ENCODE measurements at regions of chr6 and their contacts with region 1.

Region 1: DNA sequence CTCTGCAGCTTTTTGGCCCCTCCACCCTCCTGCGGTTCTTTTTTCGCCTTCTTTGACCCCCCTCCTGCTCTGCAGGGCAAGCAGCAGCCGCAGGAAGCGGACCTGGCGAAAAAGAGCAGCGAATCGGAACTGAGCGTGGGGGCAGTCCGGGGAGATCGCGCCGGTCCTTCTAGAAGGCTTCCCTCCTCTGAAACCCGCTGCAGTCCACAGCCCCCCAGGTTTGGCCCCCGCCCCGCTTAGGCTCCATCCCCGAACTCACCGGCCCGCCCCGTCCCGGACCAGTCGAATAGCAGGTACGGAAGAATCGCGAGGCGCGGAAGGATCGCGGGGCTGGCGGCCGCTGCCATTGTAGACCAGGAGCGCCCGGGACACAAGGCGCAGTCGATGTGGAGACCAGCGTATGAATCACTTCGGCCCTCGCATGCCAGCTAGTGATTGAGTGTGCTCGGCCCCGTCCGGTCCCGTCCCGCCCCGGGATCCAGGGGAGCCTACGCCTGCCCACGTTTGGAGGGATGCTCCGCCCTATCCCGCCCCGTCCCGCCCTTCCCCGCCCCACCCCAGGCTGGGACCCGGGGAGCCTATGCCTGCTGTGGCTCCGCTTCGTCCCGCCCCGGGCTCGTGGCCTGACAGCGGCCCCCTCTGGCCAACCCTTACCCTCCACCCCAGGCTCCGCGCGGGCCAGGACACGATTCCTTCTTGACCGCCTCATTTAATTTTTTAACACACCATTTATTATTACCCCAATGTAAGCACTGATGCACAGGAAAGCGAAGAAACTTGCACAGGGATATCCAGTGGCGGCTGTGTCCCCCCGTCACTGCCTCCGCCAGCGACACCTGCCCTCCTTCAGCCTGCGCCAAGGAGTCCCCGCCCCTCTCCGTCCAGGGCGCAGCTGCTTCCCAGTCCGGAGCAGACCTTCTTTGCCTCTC is at the start of gene ULBP3:
- DNase-seq: peak; percentile 64
- ATAC-seq: peak; percentile 92
- H3K4me3 Mint-ChIP-seq: peak within 1 kb of the TSS; percentile 84
- H3K27ac Mint-ChIP-seq: peak within 1 kb of the TSS; percentile 7
- H3K4me1 Mint-ChIP-seq: peaks cover 22% of the 10 kb centered on the region
- H3K27me3 Mint-ChIP-seq: peaks cover 18% of the 10 kb centered on the region
- CTCF ChIP-seq: no peak
- total RNA-seq, gene ULBP3: 0.46 and 0.80 TPM in 2 replicates

Region 2: DNA sequence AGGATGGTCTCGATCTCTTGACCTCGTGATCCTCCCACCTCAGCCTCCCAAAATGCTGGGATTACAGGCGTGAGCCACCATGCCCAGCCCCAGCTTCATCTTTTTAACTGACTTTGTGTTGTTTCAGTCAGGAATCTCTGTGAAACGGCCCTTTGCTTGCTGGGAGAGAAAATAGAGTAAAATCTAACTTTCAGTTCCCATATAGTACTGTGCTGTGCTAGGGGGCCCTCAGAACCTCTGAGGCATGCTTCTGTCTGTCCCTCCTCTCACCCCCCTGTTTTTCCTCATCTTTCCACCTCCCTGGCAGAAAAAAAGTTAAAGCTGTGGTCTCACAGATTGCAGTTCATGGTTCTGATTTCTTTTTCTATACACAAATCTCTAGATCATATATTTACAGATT is 253.2 kb before region 1 on chr6:
- CTCF ChIA-PET with region 1: no interaction called
- POLR2A ChIA-PET with region 1: no interaction called
- intact Hi-C with region 1: no loop called
- DNase-seq: no peak
- ATAC-seq: no peak
- H3K4me3 Mint-ChIP-seq: no peak overlapping the region
- H3K27ac Mint-ChIP-seq: no peak overlapping the region
- H3K4me1 Mint-ChIP-seq: peaks cover 1% of the 10 kb centered on the region
- H3K27me3 Mint-ChIP-seq: no peaks in the 10 kb centered on the region
- CTCF ChIP-seq: no peak

Region 3: GRCh38 chr6:149834513-149835481 is 234.2 kb before region 1 on chr6:
- CTCF ChIA-PET with region 1: no interaction called
- POLR2A ChIA-PET with region 1: no interaction called
- intact Hi-C with region 1: loop called (anchors 1 kb)
- DNase-seq: peak; percentile 25
- ATAC-seq: peak; percentile 56
- H3K4me3 Mint-ChIP-seq: no peak overlapping the region
- H3K27ac Mint-ChIP-seq: no peak overlapping the region
- H3K4me1 Mint-ChIP-seq: no peaks in the 10 kb centered on the region
- H3K27me3 Mint-ChIP-seq: peaks cover 13% of the 10 kb centered on the region
- CTCF ChIP-seq: peak; percentile 88

Region 4: GRCh38 chr6:150334790-150335783 is 266.1 kb after region 1 on chr6:
- CTCF ChIA-PET with region 1: interaction called, 10 read pairs
- POLR2A ChIA-PET with region 1: no interaction called
- intact Hi-C with region 1: no loop called
- DNase-seq: no peak
- ATAC-seq: peak; percentile 45
- H3K4me3 Mint-ChIP-seq: no peak overlapping the region
- H3K27ac Mint-ChIP-seq: no peak overlapping the region
- H3K4me1 Mint-ChIP-seq: no peaks in the 10 kb centered on the region
- H3K27me3 Mint-ChIP-seq: peaks cover 11% of the 10 kb centered on the region
- CTCF ChIP-seq: peak; percentile 68

Region 5: DNA sequence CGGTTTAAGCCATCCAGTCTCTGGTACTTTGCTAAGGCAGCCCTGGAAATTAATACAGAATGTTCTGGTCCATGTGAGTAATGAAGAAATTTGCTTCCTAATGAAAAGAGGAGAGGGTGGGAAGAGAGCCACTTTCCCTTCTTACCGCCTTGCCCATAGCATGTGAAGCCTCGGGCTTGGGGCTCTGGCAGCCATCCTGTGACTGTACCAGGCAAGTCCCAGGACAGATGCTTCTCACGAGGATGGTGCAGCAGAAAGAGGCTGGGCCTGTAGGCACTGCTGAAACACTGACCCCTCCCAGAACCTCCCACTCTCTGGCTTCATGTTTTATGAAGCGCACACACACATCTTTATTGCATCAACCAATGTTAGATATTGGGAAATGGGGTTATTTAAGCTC is 374.6 kb after region 1 on chr6:
- CTCF ChIA-PET with region 1: no interaction called
- POLR2A ChIA-PET with region 1: no interaction called
- intact Hi-C with region 1: no loop called
- DNase-seq: no peak
- ATAC-seq: no peak
- H3K4me3 Mint-ChIP-seq: no peak overlapping the region
- H3K27ac Mint-ChIP-seq: no peak overlapping the region
- H3K4me1 Mint-ChIP-seq: no peaks in the 10 kb centered on the region
- H3K27me3 Mint-ChIP-seq: peaks cover 7% of the 10 kb centered on the region
- CTCF ChIP-seq: no peak

Region 6: DNA sequence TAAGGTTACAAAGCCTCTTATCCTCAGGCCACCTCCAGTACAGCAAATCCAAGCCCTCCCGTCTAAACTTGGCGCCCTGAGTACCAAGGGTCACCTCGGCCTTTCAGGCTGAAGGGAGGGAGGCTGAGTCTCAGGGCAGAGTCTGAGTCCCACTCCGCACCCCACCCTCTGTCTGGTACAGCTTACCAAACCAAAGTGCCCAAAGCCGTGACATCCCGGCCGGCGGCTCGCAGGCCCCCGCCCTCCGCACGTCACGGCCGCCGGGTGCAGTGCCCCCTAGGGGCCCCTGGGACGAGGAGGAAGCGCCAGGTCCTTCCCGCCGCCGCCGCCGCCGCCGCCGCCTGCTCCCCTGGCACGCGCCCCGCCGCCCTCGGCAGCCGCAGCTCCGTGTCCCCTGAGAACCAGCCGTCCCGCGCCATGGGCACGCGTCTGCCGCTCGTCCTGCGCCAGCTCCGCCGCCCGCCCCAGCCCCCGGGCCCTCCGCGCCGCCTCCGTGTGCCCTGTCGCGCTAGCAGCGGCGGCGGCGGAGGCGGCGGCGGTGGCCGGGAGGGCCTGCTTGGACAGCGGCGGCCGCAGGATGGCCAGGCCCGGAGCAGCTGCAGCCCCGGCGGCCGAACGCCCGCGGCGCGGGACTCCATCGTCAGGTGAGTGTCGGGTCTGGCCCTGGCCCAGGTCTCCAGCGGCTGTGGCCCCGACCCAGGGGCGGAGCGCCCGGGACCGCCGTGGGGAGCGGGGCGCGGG is 796.6 kb after region 1 on chr6 and contains the start of gene MTHFD1L:
- CTCF ChIA-PET with region 1: no interaction called
- POLR2A ChIA-PET with region 1: no interaction called
- intact Hi-C with region 1: loop called (anchors 5 kb)
- DNase-seq: peak; percentile 78
- ATAC-seq: peak; percentile 77
- H3K4me3 Mint-ChIP-seq: peak within 1 kb of the TSS; percentile 90
- H3K27ac Mint-ChIP-seq: peak within 1 kb of the TSS; percentile 79
- H3K4me1 Mint-ChIP-seq: peaks cover 23% of the 10 kb centered on the region
- H3K27me3 Mint-ChIP-seq: peaks cover 2% of the 10 kb centered on the region
- CTCF ChIP-seq: no peak
- total RNA-seq, gene MTHFD1L: 56.4 and 60.4 TPM in 2 replicates

Region 7: DNA sequence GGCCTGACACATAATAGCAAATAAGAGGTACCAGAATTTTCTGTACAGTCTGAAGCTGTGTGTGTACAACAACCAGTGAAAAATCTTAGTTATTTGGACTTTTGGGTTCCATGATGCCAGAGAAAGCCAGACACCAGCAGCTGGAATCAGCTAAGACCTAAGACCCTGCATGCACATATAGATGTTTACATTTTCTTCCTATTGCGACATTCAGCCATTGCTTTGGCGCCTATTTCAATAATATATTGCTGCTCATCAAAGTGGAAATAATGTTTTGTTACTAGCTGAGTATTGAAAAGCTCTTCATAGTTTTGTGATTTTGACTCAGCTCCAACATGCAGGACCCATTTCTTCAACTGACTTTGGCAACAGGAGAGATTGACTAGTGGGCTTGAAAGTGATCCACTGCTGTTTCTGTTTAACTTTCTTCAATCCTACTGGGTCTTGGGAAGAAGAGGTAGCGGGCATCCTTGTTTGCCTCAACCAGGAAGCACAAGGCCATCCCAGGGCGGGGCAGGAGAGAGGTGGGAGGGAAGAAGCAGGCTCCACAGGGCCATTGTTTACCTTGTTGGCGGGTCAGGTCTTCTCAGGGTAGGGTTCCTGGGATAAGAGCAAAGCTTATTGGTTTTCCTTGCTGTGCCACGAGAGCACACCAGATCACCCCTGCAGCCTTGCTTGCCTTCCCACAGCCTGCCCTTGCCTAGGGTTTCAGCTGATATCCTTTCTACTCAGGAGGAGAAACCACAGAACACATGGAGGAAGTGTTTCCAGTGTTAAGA is 1637.2 kb after region 1 on chr6:
- CTCF ChIA-PET with region 1: no interaction called
- POLR2A ChIA-PET with region 1: no interaction called
- intact Hi-C with region 1: no loop called
- DNase-seq: no peak
- ATAC-seq: no peak
- H3K4me3 Mint-ChIP-seq: no peak overlapping the region
- H3K27ac Mint-ChIP-seq: no peak overlapping the region
- H3K4me1 Mint-ChIP-seq: peaks cover 34% of the 10 kb centered on the region
- H3K27me3 Mint-ChIP-seq: no peaks in the 10 kb centered on the region
- CTCF ChIP-seq: no peak

Measured in activated B cell treated with CpG ODN at 0.5 μM for 24 hours (primary cell).